IMR-90 (cell line): ENCODE measurements at regions of chr2 and their contacts with region 1.

Region 1: DNA sequence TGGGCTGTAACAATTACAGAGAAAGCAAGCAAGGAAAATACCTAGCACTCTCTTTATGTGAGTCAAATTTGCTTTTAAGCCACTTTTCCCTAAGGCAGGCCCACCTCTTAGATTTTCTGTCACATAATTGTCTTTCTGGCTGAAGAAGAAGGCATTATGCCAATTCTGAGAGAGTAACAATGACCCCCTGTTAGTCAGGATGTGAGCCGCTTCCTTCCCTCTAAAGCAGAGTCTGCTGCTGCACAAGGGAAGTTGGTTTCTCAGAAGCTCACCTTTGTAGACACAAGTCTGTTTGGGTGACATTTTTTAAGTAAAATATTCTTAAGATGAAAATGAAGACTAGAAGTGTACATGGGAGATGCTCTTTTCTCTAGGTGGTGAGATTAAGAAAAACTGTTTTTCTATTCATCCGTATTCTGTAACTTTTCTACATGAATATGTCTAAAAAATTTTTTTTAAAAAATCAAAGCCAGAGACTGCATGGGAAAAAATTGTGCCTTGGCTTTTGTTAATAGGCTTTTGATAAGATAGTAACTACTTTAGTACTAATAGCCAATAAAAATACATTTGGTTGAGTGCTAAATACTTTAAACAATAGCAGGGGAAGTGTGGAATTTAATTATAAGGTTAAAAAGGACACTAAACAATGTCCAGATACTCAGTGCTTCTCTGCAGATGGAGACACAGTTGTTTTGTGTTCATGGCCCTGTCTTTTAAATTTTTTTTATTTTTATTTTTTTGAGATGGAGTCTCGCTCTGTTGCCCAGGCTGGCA is 33.4 kb upstream of the VPS54 start:
- DNase-seq: peak; percentile 5
- ATAC-seq: no peak
- H3K4me3 ChIP-seq: no peak overlapping the region
- H3K27ac ChIP-seq: no peak overlapping the region
- H3K4me1 ChIP-seq: no peaks in the 10 kb centered on the region
- H3K27me3 ChIP-seq: peaks cover 4% of the 10 kb centered on the region
- CTCF ChIP-seq: no peak
- POLR2A ChIP-seq: no peak
- RAD21 ChIP-seq: no peak

Region 2: DNA sequence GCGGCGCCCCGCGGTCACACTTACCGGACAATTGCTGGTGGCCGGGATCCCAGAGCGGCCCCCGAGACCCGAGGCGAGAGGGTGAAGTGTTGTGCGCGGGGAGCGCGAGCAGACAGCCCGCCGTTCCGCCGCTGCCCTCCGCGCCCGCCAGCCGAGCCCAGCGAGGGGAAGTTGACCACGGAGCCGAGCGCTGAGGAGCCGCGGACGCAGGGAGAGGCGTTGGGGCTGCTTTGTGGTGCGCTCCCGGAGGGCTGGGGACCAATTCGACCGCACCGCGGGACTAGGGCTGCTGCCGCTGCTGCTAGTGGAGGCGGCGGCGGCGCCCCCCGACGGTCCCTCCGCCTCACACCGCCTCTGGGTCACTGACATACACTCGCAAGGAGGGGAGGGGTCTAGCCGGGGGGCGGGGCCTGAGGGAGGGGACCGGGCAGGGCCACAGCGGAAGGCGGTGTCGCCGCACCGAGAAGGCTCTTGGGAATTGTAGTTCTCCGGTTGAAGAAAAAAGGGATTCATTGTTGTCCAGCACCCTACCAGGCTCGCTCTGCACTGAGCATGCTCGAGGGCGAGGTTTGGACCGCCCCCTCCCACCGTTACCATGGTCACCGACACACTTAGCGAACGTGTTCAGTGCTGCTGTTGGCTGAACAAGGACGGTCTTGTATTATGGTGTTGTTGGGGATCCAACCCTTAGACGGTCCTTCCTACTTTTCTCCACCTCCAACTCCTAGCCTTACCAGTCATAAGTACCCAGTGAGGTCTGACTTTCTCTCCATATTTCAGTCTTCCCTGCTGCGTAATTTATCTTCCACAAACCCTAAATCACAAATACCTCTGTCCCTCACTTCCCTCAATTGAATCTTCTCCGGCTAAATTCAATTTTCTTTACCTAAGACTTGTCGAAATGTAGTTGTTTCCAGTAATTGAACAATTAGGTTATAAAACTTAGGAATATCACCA is 91.7 kb after region 1 on chr2 and contains the start of gene PELI1:
- CTCF ChIA-PET with region 1: interaction called, 3 read pairs
- POLR2A ChIA-PET with region 1: interaction called, 3 read pairs
- dilution Hi-C with region 1: no loop called
- in situ Hi-C with region 1: no loop called
- intact Hi-C with region 1: loop called (anchors 2 kb)
- DNase-seq: peak; percentile 95
- ATAC-seq: peak; percentile 98
- H3K4me3 ChIP-seq: peak within 1 kb of the TSS; percentile 90
- H3K27ac ChIP-seq: peak within 1 kb of the TSS; percentile 52
- H3K4me1 ChIP-seq: no peaks in the 10 kb centered on the region
- H3K27me3 ChIP-seq: peaks cover 2% of the 10 kb centered on the region
- CTCF ChIP-seq: peak; percentile 20; the same call in 1 of the 2 replicates
- POLR2A ChIP-seq: peak; percentile 80
- RAD21 ChIP-seq: peak; percentile 12; the same call in 1 of the 2 replicates
- total RNA-seq, gene PELI1: 2.5 and 4.2 TPM in 2 replicates

Region 3: DNA sequence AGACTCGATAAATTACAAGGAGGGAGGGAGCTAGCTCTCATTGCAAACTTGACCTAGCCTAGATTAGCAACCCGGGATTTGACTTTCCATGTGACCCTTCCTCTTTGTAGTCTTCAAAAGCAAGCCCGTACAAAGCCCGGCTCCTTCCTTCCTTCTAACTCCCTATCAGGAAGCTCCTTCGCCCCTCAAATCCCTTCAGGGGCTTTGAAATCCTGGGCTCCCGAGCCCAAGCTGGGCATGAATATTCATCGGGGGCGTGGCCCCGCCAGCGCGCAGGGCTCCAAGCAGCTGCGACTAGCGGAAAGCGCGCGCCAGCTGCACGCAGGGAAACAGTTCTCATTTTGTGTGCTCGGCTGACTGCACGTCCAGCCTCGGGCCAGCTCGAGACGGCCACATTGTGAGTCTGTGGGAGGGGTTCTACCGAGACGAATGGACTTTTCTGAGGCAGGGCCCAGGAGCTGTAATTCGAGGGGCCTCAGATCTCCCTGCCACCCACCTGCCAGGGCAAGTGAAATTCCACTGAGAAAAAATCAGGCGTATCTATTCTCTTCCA is 175.5 kb after region 1 on chr2:
- CTCF ChIA-PET with region 1: no interaction called
- POLR2A ChIA-PET with region 1: no interaction called
- dilution Hi-C with region 1: no loop called
- in situ Hi-C with region 1: no loop called
- intact Hi-C with region 1: loop called (anchors 1 kb)
- DNase-seq: peak; percentile 53
- ATAC-seq: peak; percentile 99
- H3K4me3 ChIP-seq: peak overlapping the region; percentile 36
- H3K27ac ChIP-seq: no peak overlapping the region
- H3K4me1 ChIP-seq: no peaks in the 10 kb centered on the region
- H3K27me3 ChIP-seq: peaks cover 23% of the 10 kb centered on the region
- CTCF ChIP-seq: no peak
- POLR2A ChIP-seq: no peak
- RAD21 ChIP-seq: no peak; the same call in 1 of the 2 replicates

Region 4: GRCh38 chr2:64488050-64488974 is 435.7 kb after region 1 on chr2:
- CTCF ChIA-PET with region 1: interaction called, 8 read pairs
- POLR2A ChIA-PET with region 1: no interaction called
- dilution Hi-C with region 1: no loop called
- in situ Hi-C with region 1: loop called (anchors 5 kb)
- intact Hi-C with region 1: loop called (anchors 1 kb)
- DNase-seq: peak; percentile 42
- ATAC-seq: peak; percentile 87
- H3K4me3 ChIP-seq: no peak overlapping the region
- H3K27ac ChIP-seq: no peak overlapping the region
- H3K4me1 ChIP-seq: peaks cover 2% of the 10 kb centered on the region; the same call in 1 of the 2 replicates
- H3K27me3 ChIP-seq: peaks cover 49% of the 10 kb centered on the region
- CTCF ChIP-seq: peak; percentile 86
- POLR2A ChIP-seq: no peak
- RAD21 ChIP-seq: peak; percentile 73